ENCODE measurements at regions of chr13 and their contacts with region 1.

Region 1: DNA sequence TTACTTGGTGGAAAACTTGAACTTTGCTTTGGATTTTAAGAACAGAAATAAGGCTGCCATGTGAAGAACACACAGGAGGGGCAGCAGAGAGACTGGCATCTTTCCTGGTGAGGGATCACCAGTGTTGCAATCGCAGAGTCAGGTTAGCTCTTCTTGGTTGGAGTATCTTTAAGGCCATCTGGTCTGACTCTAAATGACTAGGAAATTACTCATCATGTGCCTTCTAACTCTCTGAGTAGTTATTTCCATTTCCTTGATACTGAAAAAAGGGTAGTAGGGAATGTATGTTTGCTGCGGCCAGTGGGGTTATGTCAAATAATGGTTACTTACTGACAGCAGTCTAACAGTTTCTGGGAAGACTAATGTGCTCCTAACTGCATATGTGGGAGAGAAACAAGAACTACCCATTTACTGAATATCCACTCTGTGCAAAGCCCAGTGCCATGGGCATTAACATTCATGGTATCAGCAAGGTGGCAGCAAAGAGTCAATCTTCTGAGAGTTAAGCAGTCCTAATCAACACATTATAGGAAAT is 122.1 kb downstream of the COG6 start:
- DNase-seq: peak; percentile 88
- H3K4me3 ChIP-seq: no peak overlapping the region
- H3K27ac ChIP-seq: peak overlapping the region; percentile 99
- H3K4me1 ChIP-seq: peaks cover 59% of the 10 kb centered on the region
- H3K27me3 ChIP-seq: no peaks in the 10 kb centered on the region
- CTCF ChIP-seq: peak; percentile 51 to 52
- POLR2A ChIP-seq: no peak

Region 2: DNA sequence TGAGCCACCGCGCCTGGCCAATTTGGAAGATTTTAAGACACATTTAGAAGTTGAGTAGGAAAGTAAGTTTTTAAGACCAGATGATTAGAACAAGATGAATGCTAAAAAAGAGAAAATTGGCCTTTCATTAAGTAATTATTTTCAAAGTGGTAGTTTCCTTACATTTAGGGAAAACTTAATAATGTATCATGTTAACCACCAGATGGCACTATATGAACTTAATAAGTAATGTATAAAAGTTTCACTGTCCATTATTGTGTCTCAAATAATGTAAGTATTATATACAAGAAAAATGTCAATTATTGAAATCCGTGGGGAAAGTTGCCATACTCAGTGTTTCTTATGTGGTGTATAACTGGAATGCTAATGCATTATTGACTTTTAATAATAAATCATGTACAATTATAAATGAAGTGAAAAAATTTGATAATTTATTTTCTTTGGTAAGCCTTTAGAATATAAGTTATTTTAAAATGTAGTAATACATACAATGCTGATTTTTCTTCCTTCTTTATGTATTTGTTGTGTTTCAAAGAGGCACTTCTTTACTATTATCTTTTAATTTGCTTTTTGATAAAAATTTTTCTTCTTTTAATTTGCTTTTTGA is 93.0 kb before region 1 on chr13:
- CTCF ChIA-PET with region 1: interaction called, 11 read pairs
- POLR2A ChIA-PET with region 1: no interaction called
- dilution Hi-C with region 1: no loop called
- intact Hi-C with region 1: loop called (anchors 5 kb)
- DNase-seq: peak; percentile 54
- H3K4me3 ChIP-seq: no peak overlapping the region
- H3K27ac ChIP-seq: no peak overlapping the region
- H3K4me1 ChIP-seq: no peaks in the 10 kb centered on the region
- H3K27me3 ChIP-seq: no peaks in the 10 kb centered on the region
- CTCF ChIP-seq: peak in 1 of 2 donors; percentile 8
- POLR2A ChIP-seq: no peak

Region 3: DNA sequence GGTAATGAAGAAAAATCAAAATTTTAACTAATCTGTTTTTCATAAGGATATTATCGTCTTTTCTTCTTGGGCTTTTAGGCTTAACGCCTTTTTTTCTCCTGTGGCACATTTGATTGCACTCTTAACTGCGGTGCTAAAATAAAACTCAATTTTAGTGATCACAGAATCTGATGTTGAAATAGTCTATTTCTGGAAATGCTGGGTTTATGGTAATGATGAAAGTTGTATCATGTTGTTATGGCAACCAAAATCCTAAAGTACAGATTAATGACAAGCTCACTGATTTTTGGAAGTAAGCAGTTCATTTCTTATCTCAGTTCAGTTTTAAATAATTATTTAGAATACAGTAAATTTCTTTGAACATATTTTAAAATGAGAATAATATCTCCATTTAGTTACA is 36.8 kb before region 1 on chr13:
- CTCF ChIA-PET with region 1: no interaction called
- POLR2A ChIA-PET with region 1: no interaction called
- dilution Hi-C with region 1: no loop called
- intact Hi-C with region 1: no loop called
- DNase-seq: no peak
- H3K4me3 ChIP-seq: no peak overlapping the region
- H3K27ac ChIP-seq: no peak overlapping the region
- H3K4me1 ChIP-seq: no peaks in the 10 kb centered on the region
- H3K27me3 ChIP-seq: no peaks in the 10 kb centered on the region
- CTCF ChIP-seq: no peak
- POLR2A ChIP-seq: no peak

Region 4: GRCh38 chr13:40031031-40031430 is 253.4 kb after region 1 on chr13:
- CTCF ChIA-PET with region 1: interaction called, 4 read pairs
- POLR2A ChIA-PET with region 1: no interaction called
- dilution Hi-C with region 1: no loop called
- intact Hi-C with region 1: loop called (anchors 2 kb)
- DNase-seq: peak; percentile 84
- H3K4me3 ChIP-seq: no peak overlapping the region
- H3K27ac ChIP-seq: peak overlapping the region; percentile 95
- H3K4me1 ChIP-seq: peaks cover 19% of the 10 kb centered on the region
- H3K27me3 ChIP-seq: no peaks in the 10 kb centered on the region
- CTCF ChIP-seq: no peak
- POLR2A ChIP-seq: no peak

Region 5: DNA sequence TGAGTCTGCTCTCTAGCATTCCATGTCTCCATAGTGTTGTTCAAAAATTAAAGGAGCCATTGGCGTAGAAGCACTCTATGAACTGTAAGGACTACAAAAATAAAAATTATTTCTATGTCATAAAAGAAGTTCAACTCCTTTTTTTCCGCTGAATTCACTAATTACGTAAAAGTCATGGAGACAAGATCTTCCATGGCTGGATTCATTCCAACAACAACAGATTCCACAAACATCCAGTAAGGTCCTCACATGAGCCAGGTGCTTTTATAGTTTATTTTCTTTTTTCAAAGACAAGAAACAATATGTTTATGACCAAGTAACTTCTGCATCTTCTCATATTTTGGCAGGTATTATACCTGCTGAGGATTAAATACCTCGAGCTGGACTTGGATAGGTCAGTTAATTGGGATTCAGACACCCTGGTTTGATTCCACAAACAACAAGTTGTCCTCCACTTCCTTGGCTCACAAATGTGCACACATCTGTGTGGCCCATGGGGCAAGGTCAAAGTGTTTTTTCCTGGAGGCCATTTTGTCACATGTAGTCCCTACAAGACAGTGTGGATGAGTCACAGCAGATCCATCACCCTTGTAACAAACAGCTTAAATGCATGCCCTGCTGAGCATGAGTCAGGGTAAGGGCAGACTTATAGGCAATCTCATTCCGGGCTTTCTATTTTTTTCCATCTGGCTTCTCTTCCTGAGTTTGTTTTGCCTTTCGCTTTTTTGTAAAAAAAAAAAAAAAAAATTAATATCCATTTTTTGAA is 353.5 kb after region 1 on chr13:
- CTCF ChIA-PET with region 1: no interaction called
- POLR2A ChIA-PET with region 1: no interaction called
- dilution Hi-C with region 1: no loop called
- intact Hi-C with region 1: loop called (anchors 5 kb)
- DNase-seq: peak; percentile 93
- H3K4me3 ChIP-seq: no peak overlapping the region
- H3K27ac ChIP-seq: peak overlapping the region; percentile 60
- H3K4me1 ChIP-seq: peaks cover 13% of the 10 kb centered on the region
- H3K27me3 ChIP-seq: no peaks in the 10 kb centered on the region
- CTCF ChIP-seq: no peak
- POLR2A ChIP-seq: no peak

Region 6: DNA sequence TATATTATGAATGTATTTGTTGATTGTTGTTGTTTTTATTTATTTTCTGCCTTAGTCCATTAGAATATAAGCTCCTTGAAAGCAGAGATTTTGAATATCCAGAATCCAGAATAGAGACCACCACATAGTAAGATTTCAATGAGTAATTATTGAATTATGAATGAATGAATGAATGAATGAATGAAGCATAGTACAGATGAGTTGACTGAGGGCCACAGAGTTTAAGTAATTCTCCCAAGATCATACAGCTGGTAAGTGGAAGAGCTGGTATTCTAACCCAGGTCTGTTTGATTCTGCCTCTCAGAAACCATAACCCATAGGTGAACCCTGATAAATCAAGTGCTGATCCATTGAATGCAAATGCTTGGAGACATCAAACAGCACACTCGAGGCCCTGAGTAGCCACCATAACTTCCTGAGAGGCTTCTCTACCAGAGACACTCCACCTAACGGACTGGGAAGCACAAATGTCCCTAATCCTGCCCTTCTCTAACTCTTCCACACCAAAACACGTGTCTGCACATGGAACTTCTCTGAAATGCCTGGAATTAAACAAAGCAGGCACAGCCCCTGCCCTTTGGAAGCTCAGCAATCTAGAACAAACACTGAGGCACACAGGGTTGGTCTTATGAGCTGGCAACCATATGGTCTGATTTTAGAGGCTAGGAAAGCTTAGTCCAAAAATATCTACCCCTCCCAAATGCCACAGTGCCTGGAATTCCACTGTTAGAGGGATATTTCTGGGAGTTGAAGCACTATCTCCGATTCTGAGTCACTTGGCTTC is 698.8 kb after region 1 on chr13:
- CTCF ChIA-PET with region 1: no interaction called
- POLR2A ChIA-PET with region 1: no interaction called
- dilution Hi-C with region 1: no loop called
- intact Hi-C with region 1: no loop called
- DNase-seq: peak; percentile 47
- H3K4me3 ChIP-seq: no peak overlapping the region
- H3K27ac ChIP-seq: peak overlapping the region; percentile 34
- H3K4me1 ChIP-seq: peaks cover 32% of the 10 kb centered on the region
- H3K27me3 ChIP-seq: no peaks in the 10 kb centered on the region
- CTCF ChIP-seq: no peak
- POLR2A ChIP-seq: no peak

Region 7: DNA sequence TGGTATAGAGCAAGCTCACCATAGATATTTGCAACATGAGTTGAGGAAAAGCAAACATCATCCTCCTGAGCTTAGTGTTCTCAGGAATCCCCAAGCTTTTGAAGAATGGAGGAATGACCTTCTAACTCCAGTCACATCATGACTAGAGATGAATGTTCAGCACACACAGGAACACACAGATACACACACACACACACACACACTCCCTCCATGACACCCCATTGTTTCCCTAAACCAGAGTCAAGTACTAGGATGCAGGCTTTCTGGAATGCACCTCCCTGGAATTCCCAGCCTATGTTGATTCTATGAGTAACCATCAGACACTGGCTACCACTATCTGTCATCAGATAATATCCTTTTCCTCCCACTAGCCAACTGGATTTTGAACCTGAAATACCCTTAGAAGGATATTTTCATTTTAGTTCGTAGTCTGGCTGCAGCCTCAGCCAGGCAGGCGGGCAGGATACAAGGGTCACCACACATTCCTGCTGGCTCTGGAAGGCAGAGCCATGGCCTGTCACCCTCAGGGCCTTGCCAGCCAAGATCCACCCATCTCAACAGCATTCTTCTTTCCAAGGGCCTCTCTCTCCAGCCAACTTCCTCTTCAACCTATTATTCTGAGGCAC is 726.5 kb after region 1 on chr13:
- CTCF ChIA-PET with region 1: no interaction called
- POLR2A ChIA-PET with region 1: no interaction called
- dilution Hi-C with region 1: no loop called
- intact Hi-C with region 1: loop called (anchors 10 kb)
- DNase-seq: peak; percentile 99
- H3K4me3 ChIP-seq: no peak overlapping the region
- H3K27ac ChIP-seq: peak overlapping the region; percentile 99
- H3K4me1 ChIP-seq: peaks cover 51% of the 10 kb centered on the region
- H3K27me3 ChIP-seq: no peaks in the 10 kb centered on the region
- CTCF ChIP-seq: no peak
- POLR2A ChIP-seq: peak; percentile 74

Region 8: DNA sequence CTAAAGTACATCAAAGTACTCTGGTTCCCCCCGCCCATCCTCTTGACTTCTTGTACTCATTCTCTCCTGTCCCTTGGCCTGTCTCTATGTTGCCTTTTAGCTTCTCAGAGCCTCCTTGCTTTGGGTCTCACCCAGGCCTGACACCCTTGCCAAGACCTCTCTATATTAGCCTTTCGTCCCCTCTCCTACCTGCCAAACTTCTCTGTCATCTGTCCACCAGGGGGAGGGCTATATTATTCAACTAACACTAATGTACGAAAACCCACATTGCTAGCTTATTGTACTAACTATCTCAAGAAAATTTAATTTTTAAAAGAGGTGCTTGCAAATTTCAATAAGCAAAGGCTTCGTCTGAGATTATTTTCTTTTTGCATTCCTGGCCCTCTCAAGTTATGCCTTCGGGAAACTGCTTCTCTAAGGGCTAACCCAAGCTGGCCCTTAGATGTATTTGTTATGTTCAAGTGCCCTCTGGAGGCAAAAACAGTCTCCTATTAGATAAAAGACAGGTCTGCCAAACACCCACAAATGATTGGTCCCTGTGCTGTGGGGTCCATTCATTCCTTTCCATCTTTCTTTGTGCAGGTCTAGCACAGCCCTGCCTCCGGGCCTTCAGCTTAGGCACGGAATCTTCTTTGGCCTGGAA is 999.7 kb after region 1 on chr13:
- CTCF ChIA-PET with region 1: interaction called, 5 read pairs
- POLR2A ChIA-PET with region 1: no interaction called
- dilution Hi-C with region 1: no loop called
- intact Hi-C with region 1: loop called (anchors 5 kb)
- DNase-seq: peak; percentile 70
- H3K4me3 ChIP-seq: no peak overlapping the region
- H3K27ac ChIP-seq: peak overlapping the region; percentile 27
- H3K4me1 ChIP-seq: peaks cover 9% of the 10 kb centered on the region
- H3K27me3 ChIP-seq: no peaks in the 10 kb centered on the region
- CTCF ChIP-seq: peak; percentile 45 to 55
- POLR2A ChIP-seq: no peak